Vagina (tissue), 2 donors: ENCODE measurements at regions of chr7 and their contacts with region 1.

Region 1: DNA sequence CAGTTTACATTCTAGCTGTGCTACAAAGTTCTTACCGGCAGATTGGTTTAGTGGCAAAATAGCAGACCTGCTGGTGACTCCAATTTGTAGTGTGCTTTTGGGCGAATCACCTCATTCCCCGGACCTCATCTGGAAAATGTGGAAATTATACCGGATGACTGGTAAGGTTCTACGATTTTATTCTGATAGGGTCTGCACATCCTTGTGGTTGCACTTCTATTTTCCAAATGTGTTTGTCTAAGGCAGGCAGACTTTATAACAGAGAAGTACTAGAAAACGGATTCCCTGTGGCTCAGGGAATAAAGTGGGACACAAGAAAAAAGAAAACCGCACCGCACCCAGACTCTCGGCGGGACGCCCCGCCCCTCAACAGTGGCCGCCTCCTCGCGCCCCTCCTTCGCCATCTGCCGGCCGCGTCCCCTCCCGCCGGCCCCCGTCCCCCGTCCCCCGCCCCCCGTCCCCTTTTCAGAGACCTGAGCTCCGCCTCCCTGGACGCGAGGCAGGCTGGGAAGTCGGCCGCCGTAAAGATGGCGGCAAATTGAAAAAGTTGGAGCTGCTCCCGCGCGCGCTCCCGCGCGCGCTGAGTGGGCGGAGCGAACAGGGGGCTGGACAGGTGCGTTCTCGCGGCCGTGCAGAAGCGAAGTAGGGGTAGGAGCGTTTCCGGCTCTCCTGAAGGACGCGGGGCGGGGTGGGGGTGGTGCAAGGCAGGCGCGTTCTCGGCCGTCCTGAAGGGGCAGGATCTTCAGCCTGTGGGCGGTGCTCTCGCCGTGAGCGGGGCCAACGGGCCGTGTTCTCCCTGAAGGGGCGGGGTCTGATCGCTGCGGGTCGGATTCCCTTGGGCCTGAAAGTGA is 531 bp upstream of the CCM2 start:
- DNase-seq: peak; percentile 99 to 100
- H3K4me3 ChIP-seq: peak overlapping the region; percentile 89 to 91
- H3K27ac ChIP-seq: peak overlapping the region; percentile 83
- H3K4me1 ChIP-seq: peaks cover 30% of the 10 kb centered on the region
- H3K27me3 ChIP-seq: no peaks in the 10 kb centered on the region
- CTCF ChIP-seq: no peak
- POLR2A ChIP-seq: peak in 1 of 2 donors; percentile 21

Region 2: DNA sequence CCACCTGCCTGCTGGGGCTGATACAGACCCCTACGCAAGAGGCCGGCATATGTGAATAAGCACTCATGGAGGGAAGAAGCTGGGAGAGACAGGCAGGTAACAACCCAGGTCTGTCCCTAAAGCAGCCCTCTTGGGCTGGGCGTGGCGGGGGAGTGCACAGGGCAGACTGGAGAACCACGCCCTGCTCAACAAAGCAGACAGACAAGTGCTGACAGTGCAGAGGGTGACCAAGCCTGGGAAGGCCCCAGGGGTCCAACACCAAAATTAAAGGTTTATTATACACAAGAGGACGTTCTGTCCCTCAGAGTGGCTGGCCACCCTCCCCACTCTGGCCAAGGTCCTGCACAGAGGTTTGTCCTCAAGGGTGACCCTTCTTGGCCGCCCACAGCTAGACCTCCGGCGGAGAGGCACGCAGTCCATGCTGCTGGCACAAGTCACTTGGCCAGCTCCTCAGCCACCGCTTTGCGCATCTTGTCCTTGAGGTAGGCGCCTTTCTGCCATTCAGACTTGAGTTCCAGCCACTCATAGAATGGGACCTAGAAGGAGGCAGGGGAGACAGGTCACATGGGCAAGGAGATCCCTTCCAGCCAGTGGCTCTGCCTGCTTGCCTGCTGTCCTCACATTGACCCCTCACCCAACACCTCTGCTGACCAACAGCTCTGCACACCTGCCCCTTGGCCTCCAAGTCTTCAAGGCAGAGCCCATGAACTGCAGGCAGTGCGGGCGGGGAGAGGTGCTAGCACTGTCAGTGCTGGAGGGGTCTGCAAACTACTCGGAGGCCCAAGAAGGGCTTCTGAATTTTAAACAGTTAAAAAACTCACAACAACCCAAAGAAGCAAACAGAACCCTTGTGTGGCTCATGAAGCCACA is 100.7 kb after region 1 on chr7:
- intact Hi-C with region 1: loop called (anchors 5 kb)
- DNase-seq: no peak
- H3K4me3 ChIP-seq: no peak overlapping the region
- H3K27ac ChIP-seq: no peak overlapping the region
- H3K4me1 ChIP-seq: no peaks in the 10 kb centered on the region
- H3K27me3 ChIP-seq: no peaks in the 10 kb centered on the region
- CTCF ChIP-seq: no peak
- POLR2A ChIP-seq: no peak